A549 (cell line): ENCODE measurements at regions of chr12 and their contacts with region 1.

Region 1: DNA sequence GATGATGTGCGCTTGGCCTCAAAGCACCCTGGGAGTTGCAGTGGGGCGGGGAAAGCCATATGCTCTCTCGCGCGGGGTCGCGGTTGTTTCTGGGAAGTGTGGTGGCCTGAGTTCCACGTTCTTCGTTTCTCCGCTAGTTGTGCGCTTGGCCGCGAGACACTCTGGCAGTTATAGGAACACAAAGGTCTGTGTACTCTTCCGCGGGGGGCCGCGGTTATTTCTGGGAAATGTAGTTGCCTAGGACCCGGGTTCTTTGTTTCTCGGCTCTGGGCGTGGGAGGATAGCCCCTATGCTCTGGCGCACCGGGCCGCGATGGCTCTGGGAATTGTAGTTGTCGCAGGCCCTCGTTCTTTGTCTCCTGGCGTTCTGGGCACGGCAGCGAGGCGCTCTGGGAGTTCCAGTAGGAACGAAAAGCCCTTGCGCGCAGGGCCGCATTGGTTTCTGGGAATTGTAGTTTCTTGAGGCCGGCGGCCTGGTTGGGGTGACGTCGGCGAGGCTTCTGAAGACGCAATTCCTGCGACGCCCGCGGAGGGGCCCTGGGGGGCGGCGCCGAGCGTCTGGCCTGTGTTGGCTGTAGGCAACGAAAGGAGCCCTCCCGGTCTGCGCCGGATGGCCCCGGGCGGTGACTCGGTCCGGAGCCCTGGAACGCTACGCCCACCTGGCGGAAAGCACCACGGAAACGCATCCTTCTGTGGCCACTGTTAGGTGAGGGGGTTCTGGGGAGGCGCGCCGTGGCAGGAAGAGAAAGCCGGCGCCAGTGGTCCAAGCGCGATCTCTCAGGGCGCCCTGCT is at the start of gene ZNF140:
- DNase-seq: peak; percentile 68 to 98
- ATAC-seq: peak; percentile 87
- H3K4me3 ChIP-seq: peak within 1 kb of the TSS; percentile 88
- H3K27ac ChIP-seq: peak within 1 kb of the TSS; percentile 90 to 93
- H3K4me1 ChIP-seq: no peaks in the 10 kb centered on the region
- CTCF ChIP-seq: no peak
- EP300 ChIP-seq: no peak
- POLR2A ChIP-seq: peak; percentile 52
- RAD21 ChIP-seq: peak in 1 of 2 experiments; percentile 10; a peak in 1 of 5 replicates
- polyA plus RNA-seq, gene ZNF140: 22.8 and 23.2 TPM in 2 replicates

Region 2: DNA sequence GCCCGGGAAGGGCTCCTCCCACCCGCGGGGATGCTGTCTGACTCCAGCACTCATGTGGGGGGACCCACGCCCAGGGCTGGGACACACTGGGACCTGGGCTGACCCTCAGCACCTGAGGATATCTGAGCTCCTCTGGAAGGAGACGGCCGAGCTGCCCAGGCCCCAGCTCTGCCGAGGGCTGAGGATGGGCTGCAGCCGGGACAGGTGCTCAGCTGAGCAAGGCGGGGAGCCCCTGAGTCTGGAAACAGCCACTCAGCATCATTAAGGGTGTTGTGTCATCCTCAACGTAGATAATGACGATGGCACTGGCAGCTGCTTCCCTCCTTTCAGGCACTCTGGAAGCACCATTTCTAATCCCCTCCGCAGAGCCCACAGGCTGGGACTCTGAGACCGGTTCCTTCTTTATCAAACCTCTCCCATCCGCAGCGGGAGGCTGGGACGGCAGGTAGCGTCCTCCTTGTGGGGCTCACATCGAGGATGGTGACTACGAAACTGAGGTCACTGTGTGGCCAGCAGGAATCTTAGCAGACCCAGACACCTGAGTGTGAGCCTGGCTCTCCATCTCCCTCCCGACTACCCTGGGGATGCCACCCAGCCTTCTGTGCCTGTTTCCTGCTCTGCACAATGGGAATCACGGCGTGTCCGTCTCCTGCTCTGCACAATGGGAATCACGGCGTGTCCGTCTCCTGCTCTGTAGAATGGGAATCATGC is 1396.4 kb before region 1 on chr12:
- CTCF ChIA-PET with region 1: no interaction called
- POLR2A ChIA-PET with region 1: no interaction called
- DNase-seq: no peak
- ATAC-seq: peak in 1 of 2 experiments; percentile 8; a peak in 2 of 6 replicates
- H3K4me3 ChIP-seq: no peak overlapping the region
- H3K27ac ChIP-seq: no peak overlapping the region
- H3K4me1 ChIP-seq: 0 out of 3 replicates have a peak, but pooled peaks cover 5% of the 10 kb centered on the region
- CTCF ChIP-seq: no peak
- EP300 ChIP-seq: no peak
- POLR2A ChIP-seq: no peak
- RAD21 ChIP-seq: no peak

Region 3: DNA sequence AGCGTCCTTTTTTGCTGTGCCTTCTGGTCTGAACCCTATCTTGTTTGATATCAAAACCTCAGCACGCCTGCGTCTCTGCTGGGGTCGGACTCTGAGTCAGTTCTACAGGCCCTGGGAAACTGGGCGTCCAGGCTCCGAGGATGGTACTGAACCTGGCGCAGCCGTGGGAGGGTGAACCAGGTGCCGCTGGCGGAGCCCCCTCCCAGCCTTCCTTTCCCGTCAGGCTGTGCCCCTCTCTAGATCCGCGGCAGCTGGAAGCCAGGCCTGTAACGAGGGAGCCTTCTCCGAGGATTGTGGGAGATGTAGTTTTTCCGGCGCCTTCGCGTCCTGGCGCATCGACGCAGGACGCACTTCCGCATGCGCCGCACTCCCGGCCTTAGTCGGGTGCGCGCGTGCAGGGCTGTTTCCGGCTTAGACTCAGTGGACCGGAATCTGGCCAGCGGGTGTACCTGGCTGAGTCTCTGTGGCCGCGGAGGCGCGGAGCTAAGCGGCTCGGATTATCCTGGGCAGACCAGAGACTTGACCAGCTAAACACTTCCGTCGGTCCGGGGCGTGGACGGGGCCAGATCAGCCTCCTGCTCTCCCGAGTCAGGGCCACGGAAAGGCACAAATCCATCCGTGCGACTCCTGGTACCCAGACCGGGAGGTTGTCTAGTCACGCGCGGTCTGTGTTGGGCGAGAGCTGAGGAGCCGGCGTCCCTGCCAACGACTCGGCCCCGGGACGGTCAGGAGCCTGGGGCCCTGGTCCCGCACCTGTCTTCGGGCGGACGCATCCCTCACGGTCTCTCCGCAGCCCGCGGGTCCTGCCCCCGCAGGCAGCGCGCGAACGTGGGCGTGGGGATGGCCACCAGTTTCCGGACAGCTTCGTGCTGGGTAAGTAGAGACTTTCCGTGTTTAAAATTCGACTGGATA is 94.3 kb before region 1 on chr12 and contains the start of gene ZNF26:
- CTCF ChIA-PET with region 1: no interaction called
- POLR2A ChIA-PET with region 1: interaction called, 15 read pairs
- DNase-seq: peak; percentile 90 to 96
- ATAC-seq: peak; percentile 99
- H3K4me3 ChIP-seq: peak within 1 kb of the TSS; percentile 76
- H3K27ac ChIP-seq: peak within 1 kb of the TSS; percentile 77 to 89
- H3K4me1 ChIP-seq: no peaks in the 10 kb centered on the region
- CTCF ChIP-seq: no peak
- EP300 ChIP-seq: no peak
- POLR2A ChIP-seq: peak; percentile 74
- RAD21 ChIP-seq: no peak
- polyA plus RNA-seq, gene ZNF26: 10.1 and 11.3 TPM in 2 replicates

Region 4: DNA sequence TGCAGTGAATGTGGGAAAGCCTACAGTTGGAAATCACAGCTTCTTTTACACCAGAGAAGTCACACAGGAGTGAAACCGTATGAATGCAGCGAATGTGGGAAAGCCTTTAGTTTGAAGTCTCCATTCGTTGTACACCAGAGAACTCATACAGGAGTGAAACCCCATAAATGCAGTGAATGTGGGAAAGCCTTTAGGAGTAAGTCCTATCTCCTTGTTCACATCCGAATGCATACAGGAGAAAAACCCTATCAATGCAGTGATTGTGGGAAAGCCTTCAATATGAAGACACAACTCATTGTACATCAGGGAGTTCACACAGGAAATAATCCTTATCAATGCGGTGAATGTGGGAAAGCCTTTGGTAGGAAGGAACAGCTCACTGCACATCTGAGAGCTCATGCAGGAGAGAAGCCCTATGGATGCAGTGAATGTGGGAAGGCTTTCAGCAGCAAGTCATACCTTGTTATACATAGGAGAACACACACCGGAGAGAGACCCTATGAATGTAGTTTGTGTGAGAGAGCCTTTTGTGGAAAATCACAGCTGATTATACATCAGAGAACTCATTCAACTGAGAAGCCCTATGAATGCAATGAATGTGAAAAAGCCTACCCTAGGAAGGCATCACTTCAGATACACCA is 69.8 kb before region 1 on chr12:
- CTCF ChIA-PET with region 1: no interaction called
- POLR2A ChIA-PET with region 1: no interaction called
- DNase-seq: peak in 1 of 2 experiments; percentile 54
- ATAC-seq: no peak
- H3K4me3 ChIP-seq: no peak overlapping the region
- H3K27ac ChIP-seq: no peak overlapping the region
- H3K4me1 ChIP-seq: no peaks in the 10 kb centered on the region
- CTCF ChIP-seq: no peak
- EP300 ChIP-seq: no peak
- POLR2A ChIP-seq: no peak
- RAD21 ChIP-seq: no peak

Region 5: DNA sequence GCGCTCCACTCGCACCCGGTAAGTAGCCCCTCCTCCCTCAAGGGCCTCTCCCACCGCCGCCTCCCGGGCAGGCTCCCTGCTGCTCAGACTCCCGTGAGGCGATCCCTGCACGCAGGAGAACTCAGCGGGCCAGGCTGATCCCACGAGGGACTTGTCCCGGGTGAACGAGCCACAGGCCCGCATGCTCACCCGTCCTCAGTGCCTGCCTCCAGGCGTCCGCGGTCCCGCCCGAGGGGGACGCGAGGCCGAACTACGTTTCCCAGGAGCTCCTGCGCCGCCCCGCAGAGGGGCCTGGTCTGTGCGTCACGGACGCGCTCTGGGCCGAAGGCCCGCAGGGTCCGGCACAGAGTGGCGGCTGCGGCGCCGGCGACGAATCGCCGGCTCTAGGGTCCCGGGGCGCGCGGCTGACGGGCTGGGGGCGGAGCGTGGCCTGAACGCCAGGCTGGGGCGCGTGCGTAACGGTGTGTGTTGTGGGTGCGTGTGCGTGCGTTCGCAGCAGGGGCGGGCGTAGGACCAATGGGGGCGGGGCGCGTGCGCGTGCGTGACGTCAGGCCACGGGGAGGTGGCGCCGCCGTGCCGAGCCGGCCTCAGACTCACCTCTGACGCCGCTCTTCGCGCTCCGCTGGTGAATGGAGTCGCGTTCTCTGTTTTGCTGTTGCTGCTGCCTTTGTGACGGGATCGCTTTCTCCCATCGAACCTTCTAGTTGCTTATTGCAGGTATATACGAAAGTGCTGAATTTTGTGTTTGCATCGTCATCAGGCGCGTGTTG is 49.7 kb after region 1 on chr12 and contains the starts of genes ZNF10 and ZNF891:
- CTCF ChIA-PET with region 1: no interaction called
- POLR2A ChIA-PET with region 1: interaction called, 12 read pairs
- DNase-seq: peak; percentile 48 to 99
- ATAC-seq: peak; percentile 98 to 99
- H3K4me3 ChIP-seq: peak within 1 kb of the TSS; percentile 70
- H3K27ac ChIP-seq: peak within 1 kb of the TSS; percentile 74 to 88
- H3K4me1 ChIP-seq: no peaks in the 10 kb centered on the region
- CTCF ChIP-seq: no peak
- EP300 ChIP-seq: no peak
- POLR2A ChIP-seq: peak; percentile 77
- RAD21 ChIP-seq: no peak
- polyA plus RNA-seq, gene ZNF10: 4.1 and 4.5 TPM in 2 replicates
- polyA plus RNA-seq, gene ZNF891: 1.5 and 1.6 TPM in 2 replicates

Region 6: GRCh38 chr12:133181238-133181959 is 100.8 kb after region 1 on chr12 and contains the start of gene ZNF268:
- CTCF ChIA-PET with region 1: interaction called, 9 read pairs
- POLR2A ChIA-PET with region 1: interaction called, 20 read pairs
- DNase-seq: peak; percentile 80 to 97
- ATAC-seq: peak; percentile 98 to 99
- H3K4me3 ChIP-seq: peak within 1 kb of the TSS; percentile 83
- H3K27ac ChIP-seq: peak within 1 kb of the TSS; percentile 74 to 90
- H3K4me1 ChIP-seq: no peaks in the 10 kb centered on the region
- CTCF ChIP-seq: peak; percentile 76
- EP300 ChIP-seq: no peak
- POLR2A ChIP-seq: peak; percentile 55
- RAD21 ChIP-seq: peak; percentile 49 to 50; a peak in 4 of 5 replicates
- polyA plus RNA-seq, gene ZNF268: 20.0 and 21.5 TPM in 2 replicates